ENCODE measurements at regions of chr4 and their contacts with region 1.

Region 1: DNA sequence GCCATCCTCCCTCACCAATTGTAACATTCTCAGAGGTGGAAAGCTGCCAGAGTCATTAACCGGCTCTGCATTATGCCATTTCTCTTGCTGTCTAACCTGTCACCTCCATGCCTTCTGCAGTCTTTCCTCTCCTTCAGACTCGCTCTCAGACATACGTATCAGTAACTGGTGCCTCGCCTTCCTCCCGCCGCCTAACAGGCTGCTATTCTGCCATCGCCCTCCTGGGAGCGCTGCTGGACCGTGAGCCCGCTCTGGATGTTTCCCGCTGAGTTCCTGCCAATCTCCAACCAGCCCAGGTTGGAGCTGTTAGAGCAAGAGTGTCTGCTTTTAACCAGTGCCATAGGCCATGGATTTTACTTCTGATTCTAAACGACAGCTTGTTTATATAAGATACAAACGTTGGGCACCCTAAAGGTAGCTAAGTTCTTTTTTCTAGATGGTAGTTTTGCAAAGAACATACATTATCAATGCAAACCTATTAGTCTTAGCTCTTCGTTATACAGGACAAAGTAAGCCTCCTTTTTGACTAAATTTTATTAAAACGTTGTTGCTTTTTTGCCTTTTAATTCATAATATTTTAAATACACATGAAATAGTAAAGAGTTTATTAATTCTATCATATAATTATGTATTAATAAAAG is 59.5 kb upstream of the NEIL3 start:
- DNase-seq: peak; percentile 12 to 70 (median 53)
- ATAC-seq: peak; percentile 94
- H3K4me3 ChIP-seq: no peak overlapping the region
- H3K4me3 Mint-ChIP-seq: peak overlapping the region in 4 of 10 donors; percentile 18 to 64 (median 30)
- H3K27ac ChIP-seq: no peak overlapping the region
- H3K27ac Mint-ChIP-seq: peak overlapping the region in 2 of 9 donors; percentile 60 to 71
- H3K4me1 ChIP-seq: no peaks in the 10 kb centered on the region
- H3K4me1 Mint-ChIP-seq: peaks cover 7 to 15% (median 12%) of the 10 kb centered on the region in 7 donors
- H3K27me3 ChIP-seq: no peaks in the 10 kb centered on the region
- H3K27me3 Mint-ChIP-seq: peaks cover 11 to 20% (median 14%) of the 10 kb centered on the region in 5 donors

Region 2: GRCh38 chr4:176690716-176691115 is 559.5 kb before region 1 on chr4:
- CTCF ChIA-PET with region 1: no interaction called
- POLR2A ChIA-PET with region 1: no interaction called
- intact Hi-C with region 1: no loop called
- DNase-seq: no peak
- ATAC-seq: no peak
- H3K4me3 ChIP-seq: no peak overlapping the region
- H3K4me3 Mint-ChIP-seq: no peak overlapping the region
- H3K27ac ChIP-seq: no peak overlapping the region
- H3K27ac Mint-ChIP-seq: no peak overlapping the region
- H3K4me1 ChIP-seq: no peaks in the 10 kb centered on the region
- H3K4me1 Mint-ChIP-seq: no peaks in the 10 kb centered on the region
- H3K27me3 ChIP-seq: no peaks in the 10 kb centered on the region
- H3K27me3 Mint-ChIP-seq: no peaks in the 10 kb centered on the region

Region 3: GRCh38 chr4:177339477-177340374 is 89.5 kb after region 1 on chr4:
- CTCF ChIA-PET with region 1: interaction called, 5 read pairs
- POLR2A ChIA-PET with region 1: no interaction called
- intact Hi-C with region 1: loop called (anchors 1 kb)
- DNase-seq: peak in 6 of 9 donors; percentile 5 to 46 (median 32)
- ATAC-seq: peak; percentile 92
- H3K4me3 ChIP-seq: no peak overlapping the region
- H3K4me3 Mint-ChIP-seq: peak overlapping the region in 1 of 10 donors; percentile 56
- H3K27ac ChIP-seq: no peak overlapping the region
- H3K27ac Mint-ChIP-seq: peak overlapping the region in 1 of 9 donors; percentile 64
- H3K4me1 ChIP-seq: no peaks in the 10 kb centered on the region
- H3K4me1 Mint-ChIP-seq: peaks cover 0 to 22% (median 0%) of the 10 kb centered on the region in 7 donors
- H3K27me3 ChIP-seq: no peaks in the 10 kb centered on the region
- H3K27me3 Mint-ChIP-seq: no peaks in the 10 kb centered on the region

Region 4: DNA sequence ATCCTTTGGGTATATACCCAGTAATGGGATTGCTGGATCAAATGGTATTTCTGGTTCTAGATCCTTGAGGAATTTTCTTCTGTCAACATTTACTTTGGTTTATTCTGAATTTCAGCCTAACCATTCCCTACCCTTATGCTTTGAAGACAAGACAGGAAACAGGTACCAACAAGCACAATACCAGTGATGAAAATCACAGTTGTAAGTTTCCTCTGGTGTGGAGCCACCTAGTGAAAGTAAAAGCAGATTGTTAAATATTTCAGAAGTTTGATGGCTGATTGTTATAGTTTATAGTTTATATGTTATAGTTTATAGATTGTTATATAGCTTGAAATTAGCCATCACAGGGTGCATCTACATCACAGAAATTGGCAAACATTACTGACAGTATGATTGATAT is 296.6 kb after region 1 on chr4:
- CTCF ChIA-PET with region 1: interaction called, 3 read pairs
- POLR2A ChIA-PET with region 1: no interaction called
- intact Hi-C with region 1: loop called (anchors 1 to 2 kb)
- DNase-seq: peak in 3 of 9 donors; percentile 16 to 37 (median 24)
- ATAC-seq: no peak
- H3K4me3 ChIP-seq: no peak overlapping the region
- H3K4me3 Mint-ChIP-seq: no peak overlapping the region
- H3K27ac ChIP-seq: no peak overlapping the region
- H3K27ac Mint-ChIP-seq: no peak overlapping the region
- H3K4me1 ChIP-seq: no peaks in the 10 kb centered on the region
- H3K4me1 Mint-ChIP-seq: no peaks in the 10 kb centered on the region
- H3K27me3 ChIP-seq: no peaks in the 10 kb centered on the region
- H3K27me3 Mint-ChIP-seq: no peaks in the 10 kb centered on the region

Region 5: GRCh38 chr4:177555007-177555574 is 304.9 kb after region 1 on chr4:
- CTCF ChIA-PET with region 1: no interaction called
- POLR2A ChIA-PET with region 1: no interaction called
- intact Hi-C with region 1: loop called in 1 of 2 experiments (anchors 1 kb)
- DNase-seq: peak in 4 of 9 donors; percentile 1 to 13 (median 6)
- ATAC-seq: no peak
- H3K4me3 ChIP-seq: no peak overlapping the region
- H3K4me3 Mint-ChIP-seq: no peak overlapping the region
- H3K27ac ChIP-seq: no peak overlapping the region
- H3K27ac Mint-ChIP-seq: peak overlapping the region in 1 of 9 donors; percentile 59
- H3K4me1 ChIP-seq: no peaks in the 10 kb centered on the region
- H3K4me1 Mint-ChIP-seq: no peaks in the 10 kb centered on the region
- H3K27me3 ChIP-seq: no peaks in the 10 kb centered on the region
- H3K27me3 Mint-ChIP-seq: no peaks in the 10 kb centered on the region

Measured in naive thymus-derived CD4-positive, alpha-beta T cell (primary cell).